ENCODE measurements at regions of chr5 and their contacts with region 1.

Region 1: DNA sequence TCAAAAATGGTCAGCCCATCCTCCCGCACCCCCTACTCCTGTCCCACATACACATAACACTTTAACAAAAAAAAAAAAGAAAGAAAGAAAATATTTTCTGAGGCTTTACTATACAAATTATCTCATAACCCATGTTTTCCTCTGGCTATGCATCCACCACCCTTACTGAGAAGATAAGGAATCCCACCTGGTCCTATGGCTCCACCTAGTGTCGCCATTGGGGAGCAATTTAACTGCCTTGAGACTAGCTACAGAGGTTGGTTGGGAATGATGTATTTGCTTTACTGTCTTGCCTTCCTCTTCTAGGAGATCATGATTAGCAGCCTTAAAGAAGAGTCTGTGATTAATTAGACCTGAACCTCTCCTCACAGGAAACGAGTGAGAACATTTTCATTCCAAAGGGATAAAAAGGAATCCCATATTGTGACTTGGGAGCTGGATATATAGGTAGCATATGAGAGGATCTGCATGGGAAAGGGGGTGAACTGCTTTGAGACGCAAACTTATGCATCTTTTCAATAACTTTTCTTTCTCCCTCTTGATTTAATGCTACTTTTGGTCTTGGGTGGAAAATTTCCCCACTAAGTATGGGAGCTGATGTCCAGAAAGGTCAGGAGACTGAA is 77.7 kb upstream of the SELENOP start:
- DNase-seq: peak; percentile 11
- H3K4me3 ChIP-seq: no peak overlapping the region
- H3K27me3 ChIP-seq: peaks cover 10% of the 10 kb centered on the region
- CTCF ChIP-seq: peak; percentile 89

Region 2: GRCh38 chr5:42745426-42745825 is 144.0 kb before region 1 on chr5:
- CTCF ChIA-PET with region 1: interaction called, 11 read pairs
- POLR2A ChIA-PET with region 1: no interaction called
- DNase-seq: no peak
- H3K4me3 ChIP-seq: no peak overlapping the region
- H3K27me3 ChIP-seq: no peaks in the 10 kb centered on the region
- CTCF ChIP-seq: peak; percentile 50

Region 3: GRCh38 chr5:42870882-42871418 is 18.5 kb before region 1 on chr5:
- CTCF ChIA-PET with region 1: interaction called, 3 read pairs
- POLR2A ChIA-PET with region 1: interaction called, 10 read pairs
- DNase-seq: no peak
- H3K4me3 ChIP-seq: no peak overlapping the region
- H3K27me3 ChIP-seq: no peaks in the 10 kb centered on the region; the same call in 1 of the 2 replicates
- CTCF ChIP-seq: no peak

Region 4: DNA sequence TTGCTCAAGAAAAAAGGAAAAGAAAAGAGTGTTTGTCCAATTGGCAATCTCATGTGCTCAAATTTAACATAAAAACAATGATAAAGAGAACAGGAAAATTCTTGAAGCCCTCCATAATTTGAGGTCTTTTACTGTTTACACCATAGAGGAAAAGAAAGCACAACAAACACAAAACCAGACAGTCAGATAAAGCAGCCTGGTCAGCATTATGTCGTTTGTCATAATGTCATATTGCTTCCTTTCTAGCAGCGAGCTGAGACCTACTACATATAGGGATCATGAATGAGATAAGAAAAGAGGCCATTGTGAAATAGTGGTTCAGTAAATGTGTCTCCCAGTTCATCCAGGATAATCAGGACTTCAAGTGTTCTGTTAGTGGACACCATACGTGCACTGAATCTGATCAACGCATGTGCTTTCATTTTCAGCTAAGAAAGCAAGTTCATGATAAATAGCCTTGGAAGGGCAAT is 13.0 kb before region 1 on chr5:
- CTCF ChIA-PET with region 1: interaction called, 35 read pairs
- POLR2A ChIA-PET with region 1: no interaction called
- DNase-seq: no peak
- H3K4me3 ChIP-seq: no peak overlapping the region
- H3K27me3 ChIP-seq: no peaks in the 10 kb centered on the region; the same call in 1 of the 2 replicates
- CTCF ChIP-seq: no peak

Measured in BJ (cell line).